ENCODE measurements at regions of chr7 and their contacts with region 1.

Region 1: GRCh38 chr7:117312598-117313580 is 10.0 kb downstream of the WNT2 start:
- DNase-seq: no peak
- ATAC-seq: no peak
- H3K4me3 ChIP-seq: no peak overlapping the region
- H3K4me3 Mint-ChIP-seq: no peak overlapping the region
- H3K27ac ChIP-seq: no peak overlapping the region
- H3K27ac Mint-ChIP-seq: no peak overlapping the region
- H3K4me1 ChIP-seq: no peaks in the 10 kb centered on the region
- H3K4me1 Mint-ChIP-seq: no peaks in the 10 kb centered on the region
- H3K27me3 ChIP-seq: peaks cover 0 to 2% (median 0%) of the 10 kb centered on the region in 4 experiments
- H3K27me3 Mint-ChIP-seq: peaks cover 7% of the 10 kb centered on the region
- CTCF ChIP-seq: no peak

Region 2: GRCh38 chr7:117184367-117184766 is 128.5 kb before region 1 on chr7:
- CTCF ChIA-PET with region 1: no interaction called
- POLR2A ChIA-PET with region 1: no interaction called
- intact Hi-C with region 1: no loop called
- DNase-seq: no peak
- ATAC-seq: no peak
- H3K4me3 ChIP-seq: no peak overlapping the region
- H3K4me3 Mint-ChIP-seq: no peak overlapping the region
- H3K27ac ChIP-seq: no peak overlapping the region
- H3K27ac Mint-ChIP-seq: no peak overlapping the region
- H3K4me1 ChIP-seq: no peaks in the 10 kb centered on the region
- H3K4me1 Mint-ChIP-seq: no peaks in the 10 kb centered on the region
- H3K27me3 ChIP-seq: no peaks in the 10 kb centered on the region
- H3K27me3 Mint-ChIP-seq: no peaks in the 10 kb centered on the region
- CTCF ChIP-seq: no peak

Region 3: GRCh38 chr7:117296066-117296465 is 16.8 kb before region 1 on chr7:
- CTCF ChIA-PET with region 1: no interaction called
- POLR2A ChIA-PET with region 1: no interaction called
- intact Hi-C with region 1: no loop called
- DNase-seq: no peak
- ATAC-seq: no peak
- H3K4me3 ChIP-seq: no peak overlapping the region
- H3K4me3 Mint-ChIP-seq: no peak overlapping the region
- H3K27ac ChIP-seq: no peak overlapping the region
- H3K27ac Mint-ChIP-seq: no peak overlapping the region
- H3K4me1 ChIP-seq: no peaks in the 10 kb centered on the region
- H3K4me1 Mint-ChIP-seq: no peaks in the 10 kb centered on the region
- H3K27me3 ChIP-seq: no peaks in the 10 kb centered on the region
- H3K27me3 Mint-ChIP-seq: no peaks in the 10 kb centered on the region
- CTCF ChIP-seq: no peak

Region 4: GRCh38 chr7:117338020-117338419 is 25.1 kb after region 1 on chr7:
- CTCF ChIA-PET with region 1: no interaction called
- POLR2A ChIA-PET with region 1: no interaction called
- intact Hi-C with region 1: loop called (anchors 1 kb)
- DNase-seq: no peak
- ATAC-seq: no peak
- H3K4me3 ChIP-seq: no peak overlapping the region
- H3K4me3 Mint-ChIP-seq: no peak overlapping the region
- H3K27ac ChIP-seq: no peak overlapping the region
- H3K27ac Mint-ChIP-seq: no peak overlapping the region
- H3K4me1 ChIP-seq: no peaks in the 10 kb centered on the region
- H3K4me1 Mint-ChIP-seq: no peaks in the 10 kb centered on the region
- H3K27me3 ChIP-seq: no peaks in the 10 kb centered on the region
- H3K27me3 Mint-ChIP-seq: no peaks in the 10 kb centered on the region
- CTCF ChIP-seq: no peak

Measured in B cell (primary cell).